ENCODE measurements at regions of chr5 and their contacts with region 1.

Region 1: DNA sequence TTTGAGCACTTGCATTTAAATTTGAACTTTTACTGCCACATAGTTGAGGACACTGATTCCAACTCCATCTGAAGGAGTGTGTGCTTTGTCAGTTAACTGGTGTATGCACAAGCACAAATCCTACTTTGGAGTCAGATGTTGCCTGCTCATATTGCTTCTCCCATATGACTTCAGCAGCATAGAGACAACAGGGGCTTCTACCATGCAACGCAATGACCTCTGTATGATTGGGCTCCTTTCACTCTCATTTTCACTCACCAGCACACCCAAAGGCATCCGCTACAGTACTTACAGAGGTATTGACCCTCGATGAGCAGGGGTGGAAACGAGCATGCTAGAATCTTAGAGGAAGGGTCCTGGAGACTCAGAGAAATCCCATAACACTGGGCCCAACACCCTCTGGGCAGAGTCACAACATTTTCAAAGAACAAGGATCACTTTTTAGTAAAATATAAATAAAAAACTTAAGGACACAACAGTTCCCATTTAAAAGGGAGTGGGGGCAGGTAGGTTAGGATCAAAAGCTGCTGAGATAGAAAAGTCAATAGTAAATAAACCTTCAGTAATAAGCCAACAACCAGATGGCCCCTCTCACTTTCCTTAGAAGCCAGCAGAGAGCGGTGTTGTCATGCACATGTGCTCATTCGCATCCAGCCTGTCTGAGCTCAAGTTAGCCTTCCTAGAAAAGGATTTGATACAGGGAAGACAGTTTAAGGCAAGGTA is 203.8 kb downstream of the SNCAIP start:
- DNase-seq: no peak
- H3K4me3 ChIP-seq: no peak overlapping the region
- H3K27ac ChIP-seq: no peak overlapping the region
- H3K4me1 ChIP-seq: no peaks in the 10 kb centered on the region
- H3K27me3 ChIP-seq: no peaks in the 10 kb centered on the region
- CTCF ChIP-seq: peak; percentile 33 to 68 (median 51)
- POLR2A ChIP-seq: no peak

Region 2: GRCh38 chr5:122332589-122333555 is 183.0 kb before region 1 on chr5:
- intact Hi-C with region 1: no loop called
- DNase-seq: no peak
- H3K4me3 ChIP-seq: no peak overlapping the region
- H3K27ac ChIP-seq: no peak overlapping the region
- H3K4me1 ChIP-seq: no peaks in the 10 kb centered on the region
- H3K27me3 ChIP-seq: no peaks in the 10 kb centered on the region
- CTCF ChIP-seq: no peak
- POLR2A ChIP-seq: no peak

Region 3: DNA sequence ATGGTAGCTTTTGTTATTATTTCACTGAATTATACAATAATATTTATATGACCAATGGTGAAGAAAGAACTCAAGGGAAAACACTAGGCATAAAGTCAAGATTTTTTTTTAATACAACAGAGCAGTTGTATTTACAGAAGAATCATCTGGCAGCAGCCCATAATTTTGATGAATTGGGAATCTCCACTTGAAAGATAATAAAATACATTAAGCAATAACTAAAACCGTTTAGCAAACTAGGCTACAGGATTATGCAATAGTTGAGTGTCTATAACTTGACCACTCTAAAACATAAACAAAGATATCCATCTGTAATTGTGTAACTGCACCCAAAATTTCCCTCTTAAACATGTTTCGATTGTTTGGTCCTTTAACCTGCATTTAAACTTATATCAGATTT is 123.0 kb before region 1 on chr5:
- intact Hi-C with region 1: no loop called
- DNase-seq: no peak
- H3K4me3 ChIP-seq: no peak overlapping the region
- H3K27ac ChIP-seq: no peak overlapping the region
- H3K4me1 ChIP-seq: no peaks in the 10 kb centered on the region
- H3K27me3 ChIP-seq: no peaks in the 10 kb centered on the region
- CTCF ChIP-seq: no peak
- POLR2A ChIP-seq: no peak

Region 4: GRCh38 chr5:122434205-122434970 is 81.5 kb before region 1 on chr5:
- intact Hi-C with region 1: no loop called
- DNase-seq: no peak
- H3K4me3 ChIP-seq: no peak overlapping the region
- H3K27ac ChIP-seq: no peak overlapping the region
- H3K4me1 ChIP-seq: no peaks in the 10 kb centered on the region
- H3K27me3 ChIP-seq: no peaks in the 10 kb centered on the region
- CTCF ChIP-seq: no peak
- POLR2A ChIP-seq: no peak

Region 5: GRCh38 chr5:123367739-123368138 is 851.9 kb after region 1 on chr5:
- intact Hi-C with region 1: loop called (anchors 5 kb)
- DNase-seq: no peak
- H3K4me3 ChIP-seq: no peak overlapping the region
- H3K27ac ChIP-seq: no peak overlapping the region
- H3K4me1 ChIP-seq: no peaks in the 10 kb centered on the region
- H3K27me3 ChIP-seq: no peaks in the 10 kb centered on the region
- CTCF ChIP-seq: peak in 1 of 11 experiments; percentile 7
- POLR2A ChIP-seq: no peak

Measured in spleen (tissue), 13 donors.